ENCODE measurements at regions of chr6 and their contacts with region 1.

Region 1: DNA sequence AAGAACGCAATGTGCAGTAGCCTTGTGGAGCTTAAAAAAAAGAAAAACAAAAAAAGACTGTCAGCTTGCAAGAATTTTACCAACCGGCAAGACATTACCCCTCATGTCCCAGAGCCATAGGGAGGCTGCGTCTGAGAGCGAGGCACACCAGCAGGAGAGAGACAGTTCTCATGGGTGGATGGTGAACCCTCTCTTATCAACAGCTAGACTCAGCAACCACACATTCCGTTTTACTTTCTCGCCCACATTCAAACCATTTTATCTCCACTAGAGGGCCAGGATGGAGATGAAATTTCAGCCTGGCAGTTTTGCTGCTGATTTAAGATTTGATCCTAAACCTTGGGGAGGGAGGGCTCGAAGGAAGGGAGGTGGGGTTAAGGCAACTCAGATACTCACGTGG is 247.0 kb downstream of the ATXN1 start:
- DNase-seq: peak; percentile 46
- CTCF ChIP-seq: peak; percentile 26

Region 2: DNA sequence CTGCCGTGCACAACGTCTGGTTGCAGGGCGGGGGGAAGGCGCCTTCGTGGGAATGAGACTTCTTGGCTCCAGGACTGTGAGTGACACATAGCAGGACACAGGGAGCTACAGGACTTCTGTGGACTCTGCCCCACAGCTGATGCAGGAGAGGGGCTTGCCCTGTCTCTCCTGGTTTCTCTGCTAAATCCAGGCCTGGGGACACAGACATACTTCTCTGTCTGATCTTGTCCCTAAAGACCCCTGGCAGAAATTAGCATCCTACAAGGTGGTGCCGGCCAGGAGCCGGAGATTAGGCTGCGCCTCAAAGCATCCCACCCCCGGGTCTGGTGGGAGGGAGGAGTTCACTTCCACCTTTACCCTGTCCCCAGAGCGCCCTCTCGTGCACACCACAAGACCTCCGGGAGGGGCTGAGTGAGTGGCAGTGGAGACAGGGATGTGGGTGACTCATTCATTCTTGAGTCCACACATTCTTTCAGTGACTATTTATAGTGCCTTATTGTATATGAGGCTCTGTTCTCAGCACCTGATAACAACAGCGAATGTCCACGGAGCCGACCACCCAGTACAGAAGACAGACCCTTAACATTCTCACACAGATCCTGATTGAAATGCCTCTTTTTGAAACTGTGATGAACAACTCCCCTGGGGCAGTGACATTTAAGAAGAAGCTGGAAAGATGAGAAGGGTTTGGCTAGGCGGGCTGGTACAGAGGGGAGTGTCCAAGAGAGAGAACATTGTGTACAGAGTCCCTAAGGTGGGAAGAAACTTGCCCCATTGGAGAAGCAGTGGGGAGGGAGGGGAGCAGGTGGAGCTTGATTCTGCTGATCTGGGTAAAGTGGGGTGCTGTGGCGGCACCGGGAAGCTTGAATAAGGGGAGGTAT is 236.9 kb before region 1 on chr6:
- in situ Hi-C with region 1: no loop called
- DNase-seq: peak; percentile 64
- CTCF ChIP-seq: no peak

Region 3: DNA sequence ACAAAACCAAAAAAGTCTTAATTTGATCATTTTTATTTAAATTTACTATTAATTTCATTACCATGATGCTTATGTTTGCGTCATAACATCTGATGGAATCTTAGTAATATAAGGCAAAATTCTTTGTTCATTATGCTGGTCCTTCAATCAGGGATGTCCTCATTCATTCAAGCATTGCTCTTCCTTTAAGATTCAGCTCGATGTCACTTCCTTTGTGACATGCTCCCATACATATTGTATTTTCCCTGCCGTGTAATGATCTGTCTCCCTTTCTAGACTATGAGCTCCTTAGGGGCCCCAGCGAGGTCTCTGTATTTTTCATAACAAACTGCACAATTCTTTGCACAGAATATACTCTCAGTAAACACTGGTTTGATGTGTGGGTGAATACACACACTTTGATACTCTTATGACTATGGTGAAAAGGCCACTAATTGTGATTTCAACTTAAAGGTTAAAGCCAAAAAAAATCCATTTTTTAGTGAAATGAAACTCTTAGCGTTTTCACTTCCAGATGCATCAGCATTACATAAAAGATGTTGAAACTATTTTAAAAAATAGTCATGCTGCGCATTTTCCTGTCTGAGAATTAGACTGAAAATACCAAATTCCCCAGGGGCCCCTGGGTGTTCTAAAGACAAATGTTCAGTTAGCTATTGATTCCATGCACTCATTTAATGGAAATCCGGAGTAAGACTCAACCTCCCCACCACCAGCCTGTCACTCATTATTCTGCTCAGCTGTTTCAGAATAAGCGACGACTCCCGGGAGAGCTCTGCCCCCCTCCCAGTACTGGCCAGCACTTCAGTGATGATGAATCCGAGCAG is 77.4 kb after region 1 on chr6:
- in situ Hi-C with region 1: no loop called
- DNase-seq: peak; percentile 66
- CTCF ChIP-seq: no peak

Region 4: GRCh38 chr6:16761471-16762267 is 247.4 kb after region 1 on chr6:
- in situ Hi-C with region 1: loop called (anchors 25 kb)
- DNase-seq: peak; percentile 85
- CTCF ChIP-seq: peak; percentile 59

Region 5: GRCh38 chr6:16964553-16965501 is 450.6 kb after region 1 on chr6:
- in situ Hi-C with region 1: loop called (anchors 25 kb)
- DNase-seq: peak; percentile 61
- CTCF ChIP-seq: peak; percentile 85